ENCODE measurements at regions of chr1 and their contacts with region 1.

Region 1: GRCh38 chr1:150053926-150054325 is 13.7 kb upstream of the VPS45 start:
- DNase-seq: no peak
- H3K4me3 ChIP-seq: no peak overlapping the region
- H3K27ac ChIP-seq: no peak overlapping the region
- H3K27me3 ChIP-seq: no peaks in the 10 kb centered on the region
- CTCF ChIP-seq: no peak

Region 2: DNA sequence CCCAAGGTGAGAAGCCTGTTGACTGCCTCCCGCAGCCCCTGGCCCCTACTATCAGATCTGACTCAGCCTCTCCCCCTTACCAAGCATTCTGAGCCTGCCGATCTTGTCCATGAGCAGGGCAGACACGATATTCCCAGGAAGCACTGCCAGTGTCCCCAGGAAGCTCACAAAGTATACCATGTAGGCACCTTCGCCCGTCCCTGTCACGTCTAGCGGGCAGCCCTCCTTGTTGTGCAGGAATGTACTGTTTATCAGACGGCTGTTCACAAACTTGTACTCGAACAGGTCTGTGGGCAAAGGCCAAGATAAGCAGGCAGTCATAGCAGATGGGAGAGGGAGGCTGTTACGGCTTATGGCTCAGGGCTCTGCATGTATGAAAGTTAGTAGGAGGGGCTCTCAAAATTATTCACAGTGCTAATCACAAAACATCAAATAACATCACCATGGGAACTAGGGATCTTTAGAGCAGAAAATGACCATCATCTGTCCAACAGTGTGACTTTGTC is 147.3 kb before region 1 on chr1:
- CTCF ChIA-PET with region 1: no interaction called
- POLR2A ChIA-PET with region 1: no interaction called
- DNase-seq: no peak
- H3K4me3 ChIP-seq: no peak overlapping the region
- H3K27ac ChIP-seq: no peak overlapping the region
- H3K27me3 ChIP-seq: no peaks in the 10 kb centered on the region
- CTCF ChIP-seq: no peak

Region 3: GRCh38 chr1:150010393-150011115 is 43.4 kb before region 1 on chr1 and contains the start of gene OTUD7B:
- CTCF ChIA-PET with region 1: interaction called, 14 read pairs
- POLR2A ChIA-PET with region 1: interaction called, 3 read pairs
- DNase-seq: peak; percentile 63
- H3K4me3 ChIP-seq: peak within 1 kb of the TSS; percentile 94
- H3K27ac ChIP-seq: peak within 1 kb of the TSS; percentile 96
- H3K27me3 ChIP-seq: no peaks in the 10 kb centered on the region
- CTCF ChIP-seq: no peak
- polyA plus RNA-seq, gene OTUD7B: 10.7 and 11.5 TPM in 2 replicates